Activated CD4-positive, alpha-beta T cell treated with anti-CD3 and anti-CD28 coated beads for 36 hours (primary cell): ENCODE measurements at regions of chr1 and their contacts with region 1.

Region 1: GRCh38 chr1:21594935-21595897 is 73.9 kb downstream of the RAP1GAP start:
- DNase-seq: peak; percentile 85
- ATAC-seq: peak; percentile 71
- H3K4me3 Mint-ChIP-seq: no peak overlapping the region
- H3K27ac Mint-ChIP-seq: no peak overlapping the region
- H3K4me1 Mint-ChIP-seq: peaks cover 5% of the 10 kb centered on the region
- H3K27me3 Mint-ChIP-seq: peaks cover 2% of the 10 kb centered on the region

Region 2: GRCh38 chr1:21115098-21115760 is 480.0 kb before region 1 on chr1:
- CTCF ChIA-PET with region 1: no interaction called
- POLR2A ChIA-PET with region 1: no interaction called
- intact Hi-C with region 1: no loop called
- DNase-seq: no peak
- ATAC-seq: no peak
- H3K4me3 Mint-ChIP-seq: no peak overlapping the region
- H3K27ac Mint-ChIP-seq: no peak overlapping the region
- H3K4me1 Mint-ChIP-seq: no peaks in the 10 kb centered on the region
- H3K27me3 Mint-ChIP-seq: no peaks in the 10 kb centered on the region

Region 3: DNA sequence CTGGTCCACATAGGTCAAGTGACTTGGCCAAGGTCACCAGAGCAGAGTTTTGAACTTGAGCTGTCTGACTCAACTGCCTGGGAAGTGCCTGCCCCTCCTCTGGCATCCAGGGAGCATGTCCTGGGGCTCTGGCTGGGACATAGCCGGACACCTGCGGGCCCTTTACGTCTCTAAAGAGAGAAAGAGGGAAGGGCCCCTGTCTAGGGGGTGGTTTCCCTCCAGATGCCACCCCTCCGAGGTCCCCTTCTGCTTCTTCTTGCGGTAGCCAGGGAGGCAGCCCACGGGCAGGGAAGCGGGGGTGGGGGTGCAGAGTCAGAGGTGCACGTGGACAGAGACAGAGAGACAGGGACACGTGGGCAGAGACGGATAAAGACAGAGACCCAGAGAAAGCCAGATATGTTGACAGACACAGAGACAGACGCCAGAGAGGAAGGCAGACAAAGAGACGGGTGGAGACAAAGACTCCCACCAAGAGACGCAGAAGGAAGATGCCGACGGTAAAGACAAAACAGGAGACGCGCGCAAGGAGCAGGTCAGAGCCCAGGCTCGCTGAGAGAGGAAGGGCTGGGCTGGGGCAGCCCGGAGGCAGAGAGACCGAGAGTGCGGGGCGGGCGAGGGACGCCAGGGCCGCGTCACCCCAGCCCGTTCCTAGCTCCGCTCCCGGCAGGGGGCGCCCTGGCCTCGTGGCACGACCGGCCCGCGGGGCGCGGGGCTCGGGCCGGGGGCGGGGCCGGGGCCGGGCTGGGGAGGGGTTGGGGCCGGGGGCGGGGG is 86.5 kb before region 1 on chr1:
- CTCF ChIA-PET with region 1: no interaction called
- POLR2A ChIA-PET with region 1: no interaction called
- intact Hi-C with region 1: loop called in 1 of 2 experiments (anchors 1 kb)
- DNase-seq: peak; percentile 86
- ATAC-seq: peak; percentile 97
- H3K4me3 Mint-ChIP-seq: peak overlapping the region; percentile 25
- H3K27ac Mint-ChIP-seq: no peak overlapping the region
- H3K4me1 Mint-ChIP-seq: peaks cover 4% of the 10 kb centered on the region
- H3K27me3 Mint-ChIP-seq: peaks cover 38% of the 10 kb centered on the region

Region 4: GRCh38 chr1:21573971-21574465 is 21.2 kb before region 1 on chr1:
- CTCF ChIA-PET with region 1: no interaction called
- POLR2A ChIA-PET with region 1: no interaction called
- intact Hi-C with region 1: no loop called
- DNase-seq: peak; percentile 69
- ATAC-seq: peak; percentile 58
- H3K4me3 Mint-ChIP-seq: no peak overlapping the region
- H3K27ac Mint-ChIP-seq: no peak overlapping the region
- H3K4me1 Mint-ChIP-seq: no peaks in the 10 kb centered on the region
- H3K27me3 Mint-ChIP-seq: peaks cover 12% of the 10 kb centered on the region